IMR-90 (cell line): ENCODE measurements at regions of chr17 and their contacts with region 1.

Region 1: DNA sequence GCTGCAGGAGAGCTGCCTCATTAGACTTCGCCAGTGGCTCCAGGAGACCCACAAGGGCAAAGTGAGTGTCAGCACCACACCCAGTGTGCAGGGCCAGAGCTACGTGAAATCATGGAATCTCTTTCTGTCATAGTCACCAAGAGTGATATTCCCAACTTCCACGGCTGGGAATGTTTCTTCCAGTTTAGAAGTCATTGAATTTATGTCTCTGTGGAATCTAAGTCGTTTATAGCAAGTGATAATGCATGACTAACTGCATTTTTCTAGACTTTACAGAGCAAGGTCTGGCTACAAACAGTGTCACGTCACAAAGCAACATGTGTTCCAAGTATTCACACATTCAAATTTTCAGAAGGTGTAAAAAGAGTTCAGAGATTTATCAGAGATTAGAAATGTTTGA is 55.5 kb downstream of the SEC14L1 start:
- DNase-seq: no peak
- ATAC-seq: peak; percentile 44
- H3K4me3 ChIP-seq: no peak overlapping the region
- H3K27ac ChIP-seq: no peak overlapping the region
- H3K4me1 ChIP-seq: peaks cover 2% of the 10 kb centered on the region; the same call in 1 of the 2 replicates
- H3K27me3 ChIP-seq: no peaks in the 10 kb centered on the region
- CTCF ChIP-seq: no peak
- POLR2A ChIP-seq: no peak
- RAD21 ChIP-seq: no peak

Region 2: DNA sequence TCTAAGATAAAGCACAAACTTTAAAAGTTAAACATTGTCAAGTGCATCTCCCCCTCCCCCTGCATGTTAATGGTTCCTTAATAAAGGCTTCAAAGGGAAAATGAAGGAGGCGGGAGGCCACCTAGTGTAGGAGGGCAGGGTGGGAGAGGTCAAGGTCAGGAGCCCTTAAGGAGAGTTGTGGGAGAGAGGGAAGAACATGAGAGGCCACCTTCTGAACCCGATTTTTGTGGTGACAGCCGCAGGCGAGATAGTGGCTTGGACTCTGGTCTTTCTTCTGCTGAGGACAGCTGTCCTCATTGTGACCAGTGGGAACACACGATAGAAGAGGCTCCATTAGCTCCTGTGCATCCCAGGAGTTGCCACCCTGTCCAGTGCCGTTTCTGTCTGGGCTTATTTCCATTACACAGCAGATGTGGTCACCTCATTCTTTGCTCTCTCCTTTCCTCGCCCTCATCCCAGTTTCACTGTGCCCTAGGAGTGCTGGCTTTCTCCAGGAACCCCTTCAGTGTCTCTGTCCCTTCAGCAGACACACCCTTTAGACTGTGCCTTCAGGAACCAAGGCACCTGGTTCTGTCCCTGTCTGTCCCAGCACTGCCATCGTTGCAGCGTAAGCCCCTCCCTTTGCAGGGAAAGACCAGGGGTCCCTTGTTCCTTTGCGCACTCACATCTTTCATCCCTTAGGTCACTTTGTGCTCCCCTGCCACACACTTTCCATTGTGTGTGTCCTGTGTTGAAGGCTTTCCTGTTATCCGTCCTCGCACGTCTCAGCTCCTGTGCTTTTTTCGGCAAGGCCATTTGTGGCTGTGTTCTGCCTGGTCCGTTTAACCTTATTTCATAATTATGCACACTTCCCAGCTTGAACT is 47.9 kb before region 1 on chr17:
- CTCF ChIA-PET with region 1: no interaction called
- POLR2A ChIA-PET with region 1: no interaction called
- dilution Hi-C with region 1: no loop called
- in situ Hi-C with region 1: no loop called
- intact Hi-C with region 1: loop called (anchors 2 kb)
- DNase-seq: no peak
- ATAC-seq: no peak
- H3K4me3 ChIP-seq: no peak overlapping the region
- H3K27ac ChIP-seq: no peak overlapping the region
- H3K4me1 ChIP-seq: peaks cover 14% of the 10 kb centered on the region
- H3K27me3 ChIP-seq: no peaks in the 10 kb centered on the region
- CTCF ChIP-seq: no peak
- POLR2A ChIP-seq: no peak
- RAD21 ChIP-seq: no peak

Region 3: GRCh38 chr17:77235370-77235941 is 39.2 kb after region 1 on chr17:
- CTCF ChIA-PET with region 1: no interaction called
- POLR2A ChIA-PET with region 1: no interaction called
- dilution Hi-C with region 1: no loop called
- in situ Hi-C with region 1: no loop called
- intact Hi-C with region 1: no loop called
- DNase-seq: peak; percentile 88
- ATAC-seq: peak; percentile 78
- H3K4me3 ChIP-seq: peak overlapping the region; percentile 24
- H3K27ac ChIP-seq: peak overlapping the region; percentile 86
- H3K4me1 ChIP-seq: peaks cover 9% of the 10 kb centered on the region
- H3K27me3 ChIP-seq: no peaks in the 10 kb centered on the region
- CTCF ChIP-seq: no peak
- POLR2A ChIP-seq: no peak
- RAD21 ChIP-seq: no peak